Panc1 (cell line): ENCODE measurements at regions of chr12 and their contacts with region 1.

Region 1: GRCh38 chr12:53746592-53747092 is 5.1 kb downstream of the CISTR start:
- DNase-seq: peak; percentile 80
- ATAC-seq: peak; percentile 93
- H3K4me3 ChIP-seq: no peak overlapping the region
- H3K27ac ChIP-seq: peak overlapping the region; percentile 25; the same call in 1 of the 2 replicates
- H3K4me1 ChIP-seq: peaks cover 13% of the 10 kb centered on the region
- H3K27me3 ChIP-seq: 0 out of 2 replicates have a peak, but pooled peaks cover 6% of the 10 kb centered on the region
- CTCF ChIP-seq: peak; percentile 100

Region 2: GRCh38 chr12:53599579-53599978 is 147.1 kb before region 1 on chr12:
- CTCF ChIA-PET with region 1: no interaction called
- POLR2A ChIA-PET with region 1: no interaction called
- in situ Hi-C with region 1: no loop called
- intact Hi-C with region 1: no loop called
- DNase-seq: no peak
- ATAC-seq: no peak; the same call in 1 of the 2 replicates
- H3K4me3 ChIP-seq: no peak overlapping the region
- H3K27ac ChIP-seq: no peak overlapping the region
- H3K4me1 ChIP-seq: peaks cover 29% of the 10 kb centered on the region
- H3K27me3 ChIP-seq: no peaks in the 10 kb centered on the region
- CTCF ChIP-seq: peak; percentile 30; the same call in 1 of the 2 replicates

Region 3: DNA sequence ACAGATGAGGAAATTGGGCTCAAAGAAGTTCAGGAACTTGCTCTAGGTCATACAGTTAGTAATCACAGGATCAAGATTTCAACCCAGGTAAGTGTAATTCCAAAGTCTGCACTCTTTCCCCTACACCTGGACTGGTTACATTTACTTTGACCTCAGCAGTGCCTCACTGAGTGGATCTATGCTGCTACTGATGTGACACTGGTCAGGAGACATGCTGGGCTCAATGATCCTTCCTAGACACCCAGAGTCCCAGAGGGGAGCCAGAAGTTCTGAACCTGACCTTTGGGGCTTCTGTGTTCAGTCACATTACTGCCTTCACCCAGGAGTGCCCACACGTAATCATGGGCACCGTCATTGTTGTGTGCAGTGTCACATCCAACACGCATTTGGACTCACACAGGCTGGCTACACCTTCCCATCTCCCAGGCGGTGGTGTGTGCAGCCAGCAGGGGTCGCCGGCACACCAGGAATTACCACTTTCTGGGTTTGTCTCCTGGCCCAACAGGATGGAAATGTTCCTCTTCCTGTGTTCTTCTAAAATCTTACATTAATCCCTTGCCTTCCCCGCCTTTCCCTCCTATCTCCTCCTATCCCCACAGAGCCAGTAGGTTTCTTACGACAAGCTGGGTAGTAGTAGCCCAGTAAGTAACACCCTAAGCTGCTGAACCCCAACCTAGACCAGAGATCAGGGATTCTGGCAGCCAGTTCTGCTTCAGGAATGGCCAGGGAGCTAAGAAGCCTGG is 45.0 kb before region 1 on chr12:
- CTCF ChIA-PET with region 1: interaction called, 45 read pairs
- POLR2A ChIA-PET with region 1: interaction called, 3 read pairs
- in situ Hi-C with region 1: no loop called
- intact Hi-C with region 1: loop called (anchors 1 kb)
- DNase-seq: peak; percentile 61
- ATAC-seq: peak; percentile 99
- H3K4me3 ChIP-seq: no peak overlapping the region
- H3K27ac ChIP-seq: no peak overlapping the region; the same call in 1 of the 2 replicates
- H3K4me1 ChIP-seq: no peaks in the 10 kb centered on the region
- H3K27me3 ChIP-seq: peaks cover 10% of the 10 kb centered on the region
- CTCF ChIP-seq: peak; percentile 97

Region 4: DNA sequence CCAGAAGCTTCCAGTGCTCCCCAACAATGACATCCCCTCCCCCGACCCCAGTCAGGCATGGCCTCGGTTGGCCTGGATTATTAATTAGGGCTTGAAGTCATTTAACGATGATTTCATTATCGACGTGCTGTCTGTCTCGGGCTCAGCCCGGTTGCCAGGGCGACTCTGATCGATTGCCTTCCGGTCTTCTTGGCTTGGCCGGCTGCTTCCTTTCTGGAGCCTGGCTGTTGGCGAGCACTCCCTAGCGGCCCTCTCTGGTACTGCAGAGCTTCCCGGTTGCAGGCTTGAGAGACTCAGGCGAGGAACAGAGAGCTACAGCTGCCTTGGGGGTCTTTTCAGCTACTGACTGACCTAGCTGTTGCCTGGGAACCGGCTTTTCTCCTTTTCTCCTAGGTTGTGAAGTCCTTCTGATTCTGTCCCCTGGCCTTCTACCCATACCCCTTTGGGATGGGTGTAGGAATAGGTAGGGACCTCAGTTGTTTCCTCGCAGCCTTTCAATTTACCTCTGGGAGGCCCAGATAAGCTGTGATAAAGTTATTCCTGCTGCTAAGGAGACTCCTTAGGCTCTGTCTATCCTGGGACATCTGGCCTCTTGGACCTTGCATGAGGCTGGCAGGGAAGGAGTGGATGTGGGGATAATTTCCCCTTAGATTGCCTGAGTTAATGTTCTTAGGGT is 10.6 kb after region 1 on chr12:
- CTCF ChIA-PET with region 1: interaction called, 19 read pairs
- POLR2A ChIA-PET with region 1: no interaction called
- in situ Hi-C with region 1: no loop called
- intact Hi-C with region 1: no loop called
- DNase-seq: no peak
- ATAC-seq: peak; percentile 62
- H3K4me3 ChIP-seq: no peak overlapping the region
- H3K27ac ChIP-seq: peak overlapping the region; percentile 48
- H3K4me1 ChIP-seq: peaks cover 26% of the 10 kb centered on the region
- H3K27me3 ChIP-seq: no peaks in the 10 kb centered on the region
- CTCF ChIP-seq: peak; percentile 96

Region 5: DNA sequence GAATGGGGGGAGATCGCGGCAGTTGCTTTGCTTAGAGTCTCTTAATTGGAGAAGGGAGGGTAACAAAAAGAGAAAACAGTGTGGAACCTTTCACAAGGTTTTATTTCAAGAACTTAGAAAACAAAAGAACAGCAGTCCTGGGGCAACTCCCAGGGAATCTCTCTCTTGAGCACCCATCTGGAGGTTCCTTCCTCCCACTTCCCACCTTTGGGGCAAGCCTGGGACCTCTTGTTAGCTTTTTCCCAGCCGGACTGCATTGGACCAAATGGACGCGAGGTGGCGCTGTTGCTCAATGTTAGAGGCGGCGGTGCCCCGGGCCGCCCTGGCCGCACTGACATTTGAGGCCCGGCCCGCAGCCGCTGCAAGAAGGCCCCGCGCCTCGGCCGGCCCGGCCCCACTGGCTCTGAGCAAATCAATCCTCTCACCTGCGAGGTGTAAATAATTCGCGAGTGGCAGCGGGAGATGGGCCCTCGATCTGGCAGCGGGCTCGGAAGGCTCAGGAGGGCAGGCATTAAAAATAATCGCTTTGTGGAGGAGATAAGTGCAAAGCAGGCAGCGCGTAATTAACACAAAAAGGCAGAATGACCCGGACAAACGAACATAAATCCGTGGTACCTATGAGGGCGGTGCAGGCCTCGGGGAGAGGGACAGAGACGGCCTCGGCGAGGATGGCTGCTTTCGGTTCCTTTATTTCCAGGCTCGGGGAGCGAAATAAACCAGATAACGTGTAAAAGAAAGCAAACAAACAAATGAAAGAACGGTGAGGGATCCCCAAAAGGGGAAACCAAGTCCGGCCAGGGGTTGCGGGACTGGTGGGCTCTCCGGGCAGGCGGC is 259.4 kb after region 1 on chr12:
- CTCF ChIA-PET with region 1: interaction called, 3 read pairs
- POLR2A ChIA-PET with region 1: interaction called, 17 read pairs
- in situ Hi-C with region 1: no loop called
- intact Hi-C with region 1: no loop called
- DNase-seq: no peak
- ATAC-seq: peak; percentile 56
- H3K4me3 ChIP-seq: peak overlapping the region; percentile 47 to 66
- H3K27ac ChIP-seq: peak overlapping the region; percentile 99
- H3K4me1 ChIP-seq: peaks cover 44% of the 10 kb centered on the region
- H3K27me3 ChIP-seq: no peaks in the 10 kb centered on the region
- CTCF ChIP-seq: peak; percentile 91